ENCODE measurements at regions of chr12 and their contacts with region 1.

Region 1: DNA sequence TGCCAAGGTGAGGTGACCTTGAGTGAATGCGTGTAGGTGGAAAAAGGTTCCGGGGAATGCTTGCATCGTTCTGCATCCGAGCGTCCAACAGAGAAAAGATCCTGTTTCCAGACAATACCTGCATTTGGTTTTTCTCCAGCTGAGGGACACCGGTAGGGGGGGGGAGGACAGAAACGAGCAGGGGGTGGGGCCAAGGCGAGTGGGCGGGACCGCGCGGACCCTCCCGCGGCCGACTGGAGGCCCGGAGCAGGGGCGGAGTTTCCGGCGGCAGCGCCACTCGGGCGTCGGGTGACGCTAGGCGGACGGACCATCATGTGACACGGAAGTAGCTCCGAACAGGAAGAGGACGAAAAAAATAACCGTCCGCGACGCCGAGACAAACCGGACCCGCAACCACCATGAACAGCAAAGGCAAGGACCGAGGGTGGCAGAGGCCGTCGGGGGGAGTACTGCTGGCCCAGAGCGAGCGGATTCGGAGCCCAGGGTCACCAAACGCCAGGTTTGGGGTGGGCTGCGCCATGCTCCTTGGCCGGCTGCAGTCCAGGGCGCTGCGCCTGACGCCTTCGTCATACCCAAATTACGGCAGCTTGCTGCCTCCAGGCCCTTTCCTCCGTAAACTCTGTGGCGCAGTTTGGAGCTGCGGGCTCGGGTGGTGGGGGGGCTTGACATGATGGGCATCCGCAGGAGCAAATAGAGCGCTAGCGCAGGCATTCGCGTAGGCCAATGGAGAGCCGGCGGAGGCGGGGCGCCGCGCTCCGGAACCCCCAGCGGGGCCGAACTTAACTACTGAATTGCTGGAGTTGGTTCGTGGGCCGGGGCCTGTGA is at the start of gene DAZAP2:
- DNase-seq: peak; percentile 95 to 97
- H3K4me3 ChIP-seq: peak within 1 kb of the TSS; percentile 70 to 99 (median 92)
- H3K27ac ChIP-seq: peak within 1 kb of the TSS; percentile 99 to 100
- H3K4me1 ChIP-seq: peaks cover 0 to 15% of the 10 kb centered on the region in 2 donors
- H3K27me3 ChIP-seq: no peaks in the 10 kb centered on the region
- CTCF ChIP-seq: peak in 2 of 3 donors; percentile 12 to 35
- POLR2A ChIP-seq: peak; percentile 96
- total RNA-seq, gene DAZAP2: 318 to 408 (median 330) TPM

Region 2: GRCh38 chr12:49644620-49644994 is 1594.1 kb before region 1 on chr12:
- intact Hi-C with region 1: no loop called
- DNase-seq: peak; percentile 69 to 78
- H3K4me3 ChIP-seq: no peak overlapping the region
- H3K27ac ChIP-seq: peak overlapping the region in 1 of 2 donors; percentile 29
- H3K4me1 ChIP-seq: no peaks in the 10 kb centered on the region
- H3K27me3 ChIP-seq: no peaks in the 10 kb centered on the region
- CTCF ChIP-seq: peak; percentile 35 to 95 (median 83)
- POLR2A ChIP-seq: no peak

Region 3: DNA sequence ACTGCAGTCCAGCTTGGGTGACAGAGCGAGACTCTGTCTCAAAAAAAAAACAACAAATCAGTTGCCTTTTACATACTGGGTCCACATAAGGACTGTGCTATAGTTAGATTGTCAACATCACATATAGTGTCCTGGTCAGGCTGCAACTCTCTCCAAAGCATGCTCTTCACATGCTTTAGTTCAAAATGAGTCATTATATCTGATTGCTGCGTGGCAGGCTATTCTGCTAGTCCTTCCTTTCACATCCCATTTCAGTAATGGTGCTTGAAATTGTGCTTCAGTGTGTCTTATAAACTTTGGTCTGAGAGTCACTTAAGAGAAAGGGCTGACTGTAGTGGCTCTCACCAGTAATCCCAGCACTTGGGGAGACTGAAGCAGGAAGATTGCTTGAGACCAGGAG is 183.7 kb before region 1 on chr12:
- intact Hi-C with region 1: loop called (anchors 2 kb)
- DNase-seq: no peak
- H3K4me3 ChIP-seq: no peak overlapping the region
- H3K27ac ChIP-seq: no peak overlapping the region
- H3K4me1 ChIP-seq: no peaks in the 10 kb centered on the region
- H3K27me3 ChIP-seq: no peaks in the 10 kb centered on the region
- CTCF ChIP-seq: no peak
- POLR2A ChIP-seq: no peak